ENCODE measurements at regions of chr11 and their contacts with region 1.

Region 1: GRCh38 chr11:66100272-66101065 is 30.4 kb downstream of the PACS1 start:
- DNase-seq: peak; percentile 45 to 88 (median 66)
- ATAC-seq: peak; percentile 95
- H3K4me3 ChIP-seq: peak overlapping the region; percentile 42
- H3K4me3 Mint-ChIP-seq: peak overlapping the region; percentile 84
- H3K27ac ChIP-seq: peak overlapping the region; percentile 78 to 79
- H3K27ac Mint-ChIP-seq: peak overlapping the region; percentile 89
- H3K4me1 ChIP-seq: peaks cover 69% of the 10 kb centered on the region
- H3K4me1 Mint-ChIP-seq: peaks cover 69% of the 10 kb centered on the region
- H3K27me3 ChIP-seq: no peaks in the 10 kb centered on the region
- H3K27me3 Mint-ChIP-seq: no peaks in the 10 kb centered on the region
- CTCF ChIP-seq: no peak

Region 2: DNA sequence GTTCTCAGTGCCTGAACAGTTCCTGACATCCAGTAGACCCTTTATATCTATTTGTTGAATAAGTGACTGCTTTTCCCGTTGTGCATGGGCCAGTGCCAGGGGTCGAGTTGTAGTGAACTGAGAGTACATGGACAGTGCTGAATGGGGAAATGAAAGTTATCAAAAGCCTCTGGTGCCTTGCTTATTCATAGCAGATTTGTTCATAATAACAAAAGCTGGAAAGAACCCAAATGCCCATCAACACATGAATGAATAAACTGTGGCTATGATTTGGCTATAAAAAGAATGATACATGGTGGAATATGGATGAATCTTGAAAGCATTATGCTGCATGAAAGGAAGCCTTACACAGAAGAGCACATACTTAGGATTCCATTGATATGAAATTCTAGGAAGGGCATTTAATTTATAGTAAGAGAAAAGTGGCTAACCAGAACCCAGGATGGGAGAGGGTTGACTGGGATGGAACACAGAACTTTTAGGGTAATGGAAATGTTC is 12.2 kb after region 1 on chr11:
- CTCF ChIA-PET with region 1: interaction called, 5 read pairs
- POLR2A ChIA-PET with region 1: interaction called, 25 read pairs
- intact Hi-C with region 1: loop called in 1 of 2 experiments (anchors 1 kb)
- DNase-seq: peak in 1 of 14 experiments; percentile 34
- ATAC-seq: no peak
- H3K4me3 ChIP-seq: no peak overlapping the region
- H3K4me3 Mint-ChIP-seq: peak overlapping the region; percentile 50
- H3K27ac ChIP-seq: peak overlapping the region; percentile 57 to 66
- H3K27ac Mint-ChIP-seq: peak overlapping the region; percentile 83
- H3K4me1 ChIP-seq: peaks cover 79% of the 10 kb centered on the region
- H3K4me1 Mint-ChIP-seq: peaks cover 95% of the 10 kb centered on the region
- H3K27me3 ChIP-seq: no peaks in the 10 kb centered on the region
- H3K27me3 Mint-ChIP-seq: no peaks in the 10 kb centered on the region
- CTCF ChIP-seq: no peak

Region 3: GRCh38 chr11:66119348-66120133 is 19.1 kb after region 1 on chr11:
- CTCF ChIA-PET with region 1: interaction called, 11 read pairs
- POLR2A ChIA-PET with region 1: interaction called, 25 read pairs
- intact Hi-C with region 1: loop called in 1 of 2 experiments (anchors 1 kb)
- DNase-seq: no peak
- ATAC-seq: peak; percentile 15
- H3K4me3 ChIP-seq: no peak overlapping the region
- H3K4me3 Mint-ChIP-seq: peak overlapping the region; percentile 62
- H3K27ac ChIP-seq: peak overlapping the region; percentile 16 to 41
- H3K27ac Mint-ChIP-seq: peak overlapping the region; percentile 83
- H3K4me1 ChIP-seq: peaks cover 67% of the 10 kb centered on the region
- H3K4me1 Mint-ChIP-seq: peaks cover 94% of the 10 kb centered on the region
- H3K27me3 ChIP-seq: no peaks in the 10 kb centered on the region
- H3K27me3 Mint-ChIP-seq: no peaks in the 10 kb centered on the region
- CTCF ChIP-seq: no peak

Region 4: DNA sequence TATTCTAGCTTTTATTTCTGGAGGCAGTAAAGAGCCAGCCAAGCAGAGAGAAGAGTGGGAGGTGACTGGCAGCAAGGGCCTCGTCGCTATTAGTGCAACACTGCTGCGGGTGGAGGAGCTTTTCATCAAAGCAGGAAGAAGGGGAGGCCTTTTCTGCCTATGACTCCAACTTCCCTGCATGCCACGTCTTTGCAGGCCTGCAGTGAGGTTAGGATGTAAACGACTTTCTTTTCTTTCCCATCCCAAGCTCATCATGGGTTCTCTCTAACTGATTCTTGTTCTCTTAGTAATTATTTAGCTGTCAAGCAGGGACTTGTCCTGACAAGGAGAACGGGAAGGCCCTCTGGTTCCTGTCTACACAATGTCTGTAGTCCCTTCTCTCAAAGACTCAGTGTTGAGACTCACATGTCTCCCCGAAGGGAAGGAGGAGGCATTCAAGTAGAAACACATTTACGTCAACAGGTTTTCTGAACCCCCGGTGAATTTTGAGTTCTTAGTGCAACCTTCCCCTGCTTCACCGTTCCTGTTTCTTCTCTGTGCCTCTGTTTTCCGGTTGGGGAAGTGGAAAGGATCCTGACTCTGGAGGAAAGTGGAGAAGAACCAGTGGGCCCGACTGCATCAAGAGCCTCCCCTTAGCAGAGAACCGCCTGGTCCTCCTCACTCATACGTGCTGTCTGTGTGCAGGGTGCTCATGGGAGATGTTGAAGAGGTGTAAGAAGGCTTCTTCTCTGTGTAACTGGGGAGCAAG is 26.5 kb after region 1 on chr11:
- CTCF ChIA-PET with region 1: interaction called, 11 read pairs
- POLR2A ChIA-PET with region 1: interaction called, 6 read pairs
- intact Hi-C with region 1: loop called in 1 of 2 experiments (anchors 2 kb)
- DNase-seq: peak; percentile 39 to 79 (median 62)
- ATAC-seq: peak; percentile 93
- H3K4me3 ChIP-seq: peak overlapping the region; percentile 16
- H3K4me3 Mint-ChIP-seq: peak overlapping the region; percentile 82
- H3K27ac ChIP-seq: peak overlapping the region; percentile 69 to 73
- H3K27ac Mint-ChIP-seq: peak overlapping the region; percentile 95
- H3K4me1 ChIP-seq: peaks cover 34% of the 10 kb centered on the region
- H3K4me1 Mint-ChIP-seq: peaks cover 82% of the 10 kb centered on the region
- H3K27me3 ChIP-seq: no peaks in the 10 kb centered on the region
- H3K27me3 Mint-ChIP-seq: no peaks in the 10 kb centered on the region
- CTCF ChIP-seq: no peak